CD4-positive, alpha-beta memory T cell (primary cell): ENCODE measurements at regions of chr7 and their contacts with region 1.

Region 1: GRCh38 chr7:44460325-44460724 is 30.1 kb downstream of the NUDCD3 start:
- DNase-seq: peak; percentile 87 to 90 (median 87)
- H3K4me3 ChIP-seq: no peak overlapping the region
- H3K4me3 Mint-ChIP-seq: peak overlapping the region; percentile 1 to 80 (median 60)
- H3K27ac ChIP-seq: peak overlapping the region; percentile 22
- H3K27ac Mint-ChIP-seq: peak overlapping the region; percentile 76 to 93 (median 89)
- H3K4me1 ChIP-seq: peaks cover 73% of the 10 kb centered on the region
- H3K4me1 Mint-ChIP-seq: peaks cover 50 to 82% (median 68%) of the 10 kb centered on the region in 4 donors
- H3K27me3 ChIP-seq: no peaks in the 10 kb centered on the region
- H3K27me3 Mint-ChIP-seq: no peaks in the 10 kb centered on the region

Region 2: GRCh38 chr7:44415047-44415446 is 45.3 kb before region 1 on chr7:
- CTCF ChIA-PET with region 1: no interaction called
- POLR2A ChIA-PET with region 1: no interaction called
- intact Hi-C with region 1: loop called (anchors 10 kb)
- DNase-seq: no peak
- H3K4me3 ChIP-seq: no peak overlapping the region
- H3K4me3 Mint-ChIP-seq: no peak overlapping the region
- H3K27ac ChIP-seq: no peak overlapping the region
- H3K27ac Mint-ChIP-seq: peak overlapping the region in 1 of 7 donors; percentile 44
- H3K4me1 ChIP-seq: no peaks in the 10 kb centered on the region
- H3K4me1 Mint-ChIP-seq: peaks cover 10 to 36% (median 23%) of the 10 kb centered on the region in 4 donors
- H3K27me3 ChIP-seq: no peaks in the 10 kb centered on the region
- H3K27me3 Mint-ChIP-seq: no peaks in the 10 kb centered on the region